Left ventricle myocardium inferior (tissue), 1 donor: ENCODE measurements at regions of chr7 and their contacts with region 1.

Region 1: DNA sequence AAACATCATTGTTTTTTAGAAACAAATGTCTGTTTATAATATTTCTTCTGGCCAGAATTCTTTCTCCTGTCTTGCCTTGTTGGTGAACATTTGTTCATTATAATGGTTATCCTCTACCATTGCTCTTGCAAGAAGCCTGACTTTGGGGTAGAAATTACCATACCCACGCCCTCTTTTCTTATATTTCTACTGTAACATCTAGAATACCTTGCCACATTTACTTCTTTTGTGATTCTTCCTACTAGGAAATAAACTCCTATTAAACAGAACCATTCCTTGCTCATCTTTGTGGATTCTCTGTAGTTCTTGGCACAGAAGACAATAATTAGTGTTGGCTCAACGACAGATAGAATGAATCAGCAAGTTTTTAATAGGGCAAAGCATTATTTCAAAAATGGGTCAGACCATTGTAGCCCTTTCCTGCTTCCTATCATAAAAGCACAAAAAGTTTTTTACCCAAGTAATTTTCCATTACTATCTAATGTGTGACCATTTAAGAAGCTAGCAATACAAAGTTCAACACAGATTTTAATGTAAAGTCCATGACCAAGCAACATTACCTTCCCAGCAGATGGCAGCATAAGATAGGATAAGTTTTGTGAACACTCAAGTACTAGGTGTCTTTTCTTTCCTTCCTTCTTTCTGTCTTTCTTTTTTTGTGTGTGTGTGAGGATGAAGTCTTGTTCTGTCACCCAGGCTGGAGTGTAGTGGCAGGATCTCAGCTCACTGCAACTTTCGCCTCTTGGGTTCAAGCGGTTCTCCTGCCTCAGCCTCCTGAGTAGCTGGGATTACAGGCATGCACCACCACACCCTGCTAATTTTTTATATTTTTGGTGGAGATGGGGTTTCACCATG is 270.4 kb downstream of the HGF start:
- DNase-seq: no peak
- H3K4me3 ChIP-seq: no peak overlapping the region
- H3K27ac ChIP-seq: peak overlapping the region; percentile 54
- H3K4me1 ChIP-seq: peaks cover 17% of the 10 kb centered on the region
- H3K27me3 ChIP-seq: no peaks in the 10 kb centered on the region
- CTCF ChIP-seq: peak; percentile 68

Region 2: DNA sequence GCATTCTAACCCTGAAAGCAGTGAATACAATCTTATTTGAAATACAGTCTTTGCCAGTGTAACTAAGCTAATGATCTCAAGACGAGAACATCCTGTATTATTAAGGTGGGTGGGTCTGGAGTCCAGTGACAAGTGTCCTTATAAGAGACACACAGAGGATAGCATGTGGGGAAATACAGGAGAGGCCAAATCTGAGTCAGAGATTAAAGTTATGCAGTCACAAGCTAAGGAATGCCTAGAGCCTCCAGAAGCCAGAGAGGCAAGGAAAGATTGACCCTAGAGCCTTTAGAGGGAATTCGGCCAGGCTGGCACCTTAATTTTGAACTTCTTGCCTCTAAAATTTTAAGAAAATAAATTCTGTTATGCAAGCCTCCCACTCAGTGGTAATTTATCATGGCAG is 357.9 kb after region 1 on chr7:
- intact Hi-C with region 1: no loop called
- DNase-seq: no peak
- H3K4me3 ChIP-seq: no peak overlapping the region
- H3K27ac ChIP-seq: no peak overlapping the region
- H3K4me1 ChIP-seq: no peaks in the 10 kb centered on the region
- H3K27me3 ChIP-seq: no peaks in the 10 kb centered on the region
- CTCF ChIP-seq: no peak

Region 3: DNA sequence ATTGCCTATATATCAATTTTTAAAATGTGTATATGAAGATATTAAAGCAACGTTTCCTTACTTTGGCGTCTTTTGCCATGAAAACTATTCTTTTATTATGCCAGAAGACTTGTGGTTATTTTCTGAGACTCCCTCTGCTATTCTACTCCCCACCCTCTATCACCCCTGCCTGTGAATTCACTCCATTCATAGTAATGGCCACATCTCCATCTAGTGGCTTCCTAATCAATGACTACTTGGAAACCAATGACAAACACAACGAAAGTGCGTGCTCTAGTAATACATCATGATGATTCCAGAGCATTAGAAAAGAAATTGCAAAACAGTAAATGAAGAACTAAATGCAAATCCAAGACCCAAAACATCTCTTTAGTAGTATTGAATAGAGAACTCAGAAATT is 457.0 kb after region 1 on chr7:
- intact Hi-C with region 1: loop called (anchors 10 kb)
- DNase-seq: no peak
- H3K4me3 ChIP-seq: no peak overlapping the region
- H3K27ac ChIP-seq: no peak overlapping the region
- H3K4me1 ChIP-seq: peaks cover 25% of the 10 kb centered on the region
- H3K27me3 ChIP-seq: no peaks in the 10 kb centered on the region
- CTCF ChIP-seq: peak; percentile 62

Region 4: DNA sequence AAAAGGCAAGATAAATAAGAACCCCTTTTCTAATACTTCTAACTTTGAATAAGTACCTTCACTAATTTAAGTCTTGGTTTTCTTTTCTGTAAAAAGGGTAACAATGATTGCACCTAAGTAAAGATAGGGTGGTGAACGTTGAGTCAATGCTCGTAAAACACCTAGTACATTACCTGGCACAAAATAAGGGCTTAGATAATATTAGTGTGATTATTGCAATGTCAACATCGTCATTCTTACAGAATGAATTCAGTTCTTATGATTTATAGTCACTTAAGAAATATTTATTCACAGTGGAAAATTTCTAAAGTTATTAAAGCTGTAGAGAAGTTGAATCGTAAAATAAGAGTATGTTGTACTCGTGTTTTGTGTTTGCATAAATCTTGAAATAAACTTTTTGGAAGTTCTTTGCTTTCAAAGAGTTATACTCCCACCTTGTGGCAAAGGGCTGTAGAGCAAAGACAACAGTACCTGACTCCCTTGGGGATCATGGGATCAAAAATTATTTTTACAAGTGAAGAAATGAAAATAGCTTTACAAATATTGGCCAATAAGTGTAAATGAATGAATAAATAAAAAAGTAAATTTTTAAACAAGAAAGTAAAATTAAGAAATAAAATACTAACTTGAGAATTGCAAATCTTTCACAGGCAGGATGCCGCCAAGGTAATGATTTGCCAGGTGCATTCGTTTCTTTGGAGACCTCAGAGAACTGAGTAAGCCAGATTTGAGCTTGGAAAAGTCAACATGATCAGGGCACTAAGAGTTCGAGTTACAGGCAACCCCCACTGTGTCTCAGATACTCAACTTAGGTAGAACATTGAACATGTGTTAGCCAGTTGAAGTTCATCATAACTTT is 1229.9 kb after region 1 on chr7:
- intact Hi-C with region 1: loop called (anchors 10 kb)
- DNase-seq: no peak
- H3K4me3 ChIP-seq: no peak overlapping the region
- H3K27ac ChIP-seq: no peak overlapping the region
- H3K4me1 ChIP-seq: no peaks in the 10 kb centered on the region
- H3K27me3 ChIP-seq: no peaks in the 10 kb centered on the region
- CTCF ChIP-seq: peak; percentile 64